HCT116 (cell line): ENCODE measurements at regions of chr16 and their contacts with region 1.

Region 1: DNA sequence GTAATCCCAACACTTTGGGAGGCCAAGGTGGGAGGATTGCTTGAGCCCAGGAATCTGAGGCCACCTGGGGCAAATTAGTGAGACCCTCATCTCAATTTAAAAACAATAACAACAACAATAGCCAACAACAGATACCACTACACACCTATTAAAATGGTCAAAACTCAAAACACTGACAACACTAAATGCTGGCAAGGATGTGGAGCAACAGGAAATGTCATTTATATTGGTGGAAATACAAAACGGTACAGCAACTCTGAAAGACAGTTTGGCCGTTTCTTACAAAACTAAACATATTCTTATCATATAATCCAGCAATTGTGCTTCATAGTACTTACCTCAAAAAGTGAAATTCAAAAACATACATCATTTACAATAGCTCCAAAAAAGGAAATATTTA is 57.7 kb downstream of the DNAH3 start:
- DNase-seq: no peak
- ATAC-seq: no peak
- H3K4me3 ChIP-seq: no peak overlapping the region
- H3K27ac ChIP-seq: no peak overlapping the region
- H3K4me1 ChIP-seq: no peaks in the 10 kb centered on the region
- H3K27me3 ChIP-seq: no peaks in the 10 kb centered on the region
- CTCF ChIP-seq: no peak
- POLR2A ChIP-seq: no peak
- RAD21 ChIP-seq: no peak

Region 2: DNA sequence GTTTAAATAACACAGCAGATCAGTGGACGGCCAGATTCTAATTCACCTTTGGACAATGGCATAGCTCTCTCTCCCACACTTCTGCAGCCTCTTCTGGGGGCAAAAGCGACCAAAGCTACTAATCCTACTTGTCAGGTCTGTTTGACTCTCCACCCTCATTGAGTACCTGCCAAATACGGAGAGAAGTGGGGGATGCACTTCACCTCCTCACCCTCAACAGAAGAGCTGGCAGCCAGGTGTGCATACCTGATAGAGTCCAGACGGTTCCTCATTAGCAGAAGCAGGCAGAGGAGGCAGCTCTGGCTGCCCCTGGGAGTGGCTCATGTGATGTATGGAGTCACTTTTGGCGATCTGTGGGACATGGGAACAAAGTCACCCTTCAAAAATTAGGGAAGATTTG is 52.8 kb after region 1 on chr16:
- CTCF ChIA-PET with region 1: no interaction called
- POLR2A ChIA-PET with region 1: no interaction called
- RAD21 ChIA-PET with region 1: no interaction called
- intact Hi-C with region 1: loop called (anchors 5 kb)
- DNase-seq: no peak
- ATAC-seq: no peak
- H3K4me3 ChIP-seq: no peak overlapping the region
- H3K27ac ChIP-seq: no peak overlapping the region
- H3K4me1 ChIP-seq: no peaks in the 10 kb centered on the region
- H3K27me3 ChIP-seq: no peaks in the 10 kb centered on the region; the same call in 1 of the 2 replicates
- CTCF ChIP-seq: no peak
- POLR2A ChIP-seq: no peak
- RAD21 ChIP-seq: no peak